ENCODE measurements at regions of chr14 and their contacts with region 1.

Region 1: GRCh38 chr14:106665814-106666213 is 1139.4 kb downstream of the TMEM121 start:
- DNase-seq: peak; percentile 37
- H3K4me3 Mint-ChIP-seq: no peak overlapping the region
- H3K27ac Mint-ChIP-seq: peak overlapping the region; percentile 5
- H3K4me1 Mint-ChIP-seq: peaks cover 24% of the 10 kb centered on the region
- H3K27me3 Mint-ChIP-seq: peaks cover 51% of the 10 kb centered on the region

Region 2: GRCh38 chr14:106308839-106309389 is 356.9 kb before region 1 on chr14:
- CTCF ChIA-PET with region 1: interaction called, 14 read pairs
- POLR2A ChIA-PET with region 1: no interaction called
- DNase-seq: peak; percentile 88
- H3K4me3 Mint-ChIP-seq: peak overlapping the region; percentile 43
- H3K27ac Mint-ChIP-seq: peak overlapping the region; percentile 61
- H3K4me1 Mint-ChIP-seq: no peaks in the 10 kb centered on the region
- H3K27me3 Mint-ChIP-seq: peaks cover 50% of the 10 kb centered on the region

Region 3: GRCh38 chr14:106605548-106606448 is 60.0 kb before region 1 on chr14:
- CTCF ChIA-PET with region 1: interaction called, 12 read pairs
- POLR2A ChIA-PET with region 1: no interaction called
- DNase-seq: peak; percentile 82
- H3K4me3 Mint-ChIP-seq: no peak overlapping the region
- H3K27ac Mint-ChIP-seq: no peak overlapping the region
- H3K4me1 Mint-ChIP-seq: peaks cover 9% of the 10 kb centered on the region
- H3K27me3 Mint-ChIP-seq: peaks cover 56% of the 10 kb centered on the region

Region 4: DNA sequence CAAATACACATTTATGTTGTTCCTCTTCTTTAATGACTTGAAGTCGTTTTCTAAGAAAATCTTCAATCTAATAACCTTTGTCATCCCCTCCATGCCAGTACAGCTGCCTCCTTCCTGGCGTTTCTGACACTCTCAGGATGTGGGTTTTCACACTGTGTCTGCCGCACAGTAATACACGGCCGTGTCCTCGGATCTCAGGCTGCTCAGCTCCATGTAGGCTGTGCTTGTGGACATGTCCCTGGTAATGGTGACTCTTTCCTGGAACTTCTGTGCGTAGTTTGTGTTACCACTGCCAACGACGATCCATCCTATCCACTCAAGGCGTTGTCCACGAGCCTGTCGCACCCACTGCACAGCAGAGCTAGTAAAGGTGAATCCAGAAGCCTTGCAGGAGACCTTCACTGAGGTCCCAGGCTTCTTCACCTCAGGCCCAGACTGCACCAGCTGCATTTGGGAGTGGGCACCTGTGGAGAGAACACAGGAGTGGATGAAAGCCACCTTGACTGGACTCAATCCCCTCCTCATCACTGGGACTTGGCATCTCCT is 43.5 kb before region 1 on chr14:
- CTCF ChIA-PET with region 1: interaction called, 25 read pairs
- POLR2A ChIA-PET with region 1: no interaction called
- DNase-seq: peak; percentile 47
- H3K4me3 Mint-ChIP-seq: no peak overlapping the region
- H3K27ac Mint-ChIP-seq: no peak overlapping the region
- H3K4me1 Mint-ChIP-seq: peaks cover 23% of the 10 kb centered on the region
- H3K27me3 Mint-ChIP-seq: peaks cover 54% of the 10 kb centered on the region

Region 5: DNA sequence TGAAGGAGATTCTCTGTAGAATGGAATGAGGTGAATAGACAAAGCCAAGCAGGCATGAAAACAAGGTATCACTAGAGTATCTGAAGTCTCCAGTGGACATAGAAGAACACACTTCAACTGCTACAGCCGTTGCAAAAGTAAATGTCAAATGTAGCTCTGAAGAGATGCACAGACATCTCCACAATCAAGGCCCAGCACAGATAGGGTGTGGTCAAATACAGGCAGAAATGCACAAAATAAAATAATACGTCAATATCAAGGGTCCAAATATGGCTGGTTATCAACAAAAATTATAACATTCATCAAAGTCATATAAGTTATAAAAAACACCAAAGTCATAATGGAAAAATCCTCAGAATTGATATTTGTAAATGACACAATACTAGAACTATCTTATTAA is 32.1 kb before region 1 on chr14:
- CTCF ChIA-PET with region 1: interaction called, 15 read pairs
- POLR2A ChIA-PET with region 1: no interaction called
- DNase-seq: no peak
- H3K4me3 Mint-ChIP-seq: no peak overlapping the region
- H3K27ac Mint-ChIP-seq: no peak overlapping the region
- H3K4me1 Mint-ChIP-seq: peaks cover 4% of the 10 kb centered on the region
- H3K27me3 Mint-ChIP-seq: peaks cover 29% of the 10 kb centered on the region

Region 6: GRCh38 chr14:106681568-106681967 is 15.8 kb after region 1 on chr14:
- CTCF ChIA-PET with region 1: interaction called, 95 read pairs
- POLR2A ChIA-PET with region 1: no interaction called
- DNase-seq: no peak
- H3K4me3 Mint-ChIP-seq: no peak overlapping the region
- H3K27ac Mint-ChIP-seq: no peak overlapping the region
- H3K4me1 Mint-ChIP-seq: no peaks in the 10 kb centered on the region
- H3K27me3 Mint-ChIP-seq: peaks cover 53% of the 10 kb centered on the region

Region 7: DNA sequence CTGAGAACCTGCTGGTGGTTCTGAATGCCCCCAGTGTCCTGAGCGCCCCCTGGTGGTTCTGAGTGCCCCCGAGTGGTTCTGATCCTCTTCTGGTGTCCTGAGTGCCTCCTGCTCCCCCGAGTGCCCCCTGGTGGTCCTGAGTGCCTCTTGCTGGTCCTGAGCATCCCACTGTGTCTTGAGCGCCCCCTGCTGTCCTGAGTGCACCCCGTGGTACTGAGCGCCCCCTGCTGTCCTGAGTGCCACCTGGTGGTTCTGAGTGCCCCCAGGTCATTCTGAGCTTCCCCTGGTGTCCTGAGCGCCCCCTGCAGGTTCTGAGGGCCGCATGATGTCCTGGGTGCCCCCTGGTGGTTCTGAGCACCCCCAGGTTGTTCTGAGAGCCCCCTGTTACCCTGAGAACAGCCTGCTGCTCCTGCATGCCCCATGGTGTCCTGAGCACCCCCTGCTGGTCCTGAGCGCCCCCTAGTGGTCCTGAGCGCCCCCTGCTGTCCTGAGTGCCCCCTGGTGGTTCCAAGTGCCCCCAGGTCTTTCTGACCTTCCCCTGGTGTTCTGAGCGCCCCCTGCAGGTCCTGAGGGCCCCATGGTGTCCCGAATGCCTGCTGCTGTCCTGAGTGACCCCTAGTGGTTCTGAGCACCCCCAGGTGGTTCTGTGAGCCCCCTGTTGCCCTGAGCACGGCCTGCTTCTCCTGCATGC is 25.9 kb after region 1 on chr14:
- CTCF ChIA-PET with region 1: interaction called, 17 read pairs
- POLR2A ChIA-PET with region 1: no interaction called
- DNase-seq: peak; percentile 62
- H3K4me3 Mint-ChIP-seq: no peak overlapping the region
- H3K27ac Mint-ChIP-seq: no peak overlapping the region
- H3K4me1 Mint-ChIP-seq: peaks cover 20% of the 10 kb centered on the region
- H3K27me3 Mint-ChIP-seq: peaks cover 13% of the 10 kb centered on the region

Measured in activated CD4-positive, alpha-beta T cell treated with anti-CD3 and anti-CD28 coated beads, Interleukin-2, amount 10 ng/mL, durations not matched to agents 7 days and 5 days (primary cell).